Calu3 (cell line): ENCODE measurements at regions of chr19 and their contacts with region 1.

Region 1: GRCh38 chr19:1243761-1244692 is 2.5 kb downstream of the ATP5F1D start:
- DNase-seq: peak; percentile 85
- H3K4me3 Mint-ChIP-seq: no peak overlapping the region
- H3K27ac Mint-ChIP-seq: no peak overlapping the region
- H3K4me1 Mint-ChIP-seq: peaks cover 17% of the 10 kb centered on the region
- H3K27me3 Mint-ChIP-seq: no peaks in the 10 kb centered on the region
- CTCF ChIP-seq: peak; percentile 83

Region 2: GRCh38 chr19:1269065-1269477 is 25.0 kb after region 1 on chr19 and contains the start of gene CIRBP:
- CTCF ChIA-PET with region 1: interaction called, 177 read pairs
- intact Hi-C with region 1: no loop called
- DNase-seq: peak; percentile 97
- H3K4me3 Mint-ChIP-seq: peak within 1 kb of the TSS; percentile 92
- H3K27ac Mint-ChIP-seq: peak within 1 kb of the TSS; percentile 88
- H3K4me1 Mint-ChIP-seq: peaks cover 39% of the 10 kb centered on the region
- H3K27me3 Mint-ChIP-seq: no peaks in the 10 kb centered on the region
- CTCF ChIP-seq: no peak
- total RNA-seq, gene CIRBP: 102 and 112 TPM in 2 replicates